ENCODE measurements at regions of chr11 and their contacts with region 1.

Region 1: DNA sequence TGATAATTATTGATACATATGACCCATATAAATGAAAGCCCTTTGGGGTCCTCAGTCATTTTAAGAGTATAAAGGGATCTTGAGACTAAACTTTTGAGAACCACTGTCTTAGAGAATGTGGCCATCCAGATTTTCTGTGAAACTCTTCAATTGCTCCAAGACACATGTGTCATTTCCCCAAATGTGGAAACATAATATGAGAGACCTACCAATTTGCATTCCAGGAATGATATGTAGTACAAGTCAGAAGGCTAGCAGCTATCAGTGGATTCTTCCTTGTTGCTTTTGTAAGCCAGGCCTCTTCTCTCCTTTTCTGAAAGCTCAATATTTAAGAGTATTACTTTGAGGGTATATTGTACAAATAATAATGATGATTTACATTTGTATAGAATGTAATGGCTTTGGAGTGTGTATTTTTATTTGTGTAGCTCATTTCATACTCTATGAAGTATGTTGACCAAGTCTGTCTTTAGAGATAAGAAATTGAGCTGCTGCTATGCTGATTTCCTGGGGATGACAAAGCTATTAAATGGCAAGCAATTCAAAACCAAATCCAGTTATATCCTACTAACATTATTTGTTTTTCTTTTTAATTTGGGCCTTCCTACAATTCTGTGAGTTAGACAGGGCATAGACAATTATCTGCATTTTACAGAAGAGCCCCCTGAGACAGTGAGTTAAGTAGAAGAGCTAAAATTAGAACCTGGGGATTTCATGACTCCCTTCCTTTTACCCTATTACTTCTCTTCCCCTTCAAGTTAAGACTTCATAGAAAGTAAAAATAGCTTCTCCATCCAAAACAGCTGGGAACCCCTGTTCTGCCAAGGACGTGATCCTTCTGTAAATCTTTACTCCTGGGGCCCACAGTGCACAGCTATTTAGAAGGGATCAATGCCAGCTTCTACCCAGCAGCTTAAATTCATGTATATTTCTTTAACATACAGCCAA is 131.9 kb downstream of the WNT11 start:
- DNase-seq: no peak
- H3K4me3 ChIP-seq: no peak overlapping the region
- H3K27ac ChIP-seq: peak overlapping the region in 3 of 5 donors; percentile 0 to 20 (median 15)
- H3K4me1 ChIP-seq: peaks cover 4 to 30% of the 10 kb centered on the region in 2 donors
- H3K27me3 ChIP-seq: no peaks in the 10 kb centered on the region
- CTCF ChIP-seq: no peak
- POLR2A ChIP-seq: no peak

Region 2: DNA sequence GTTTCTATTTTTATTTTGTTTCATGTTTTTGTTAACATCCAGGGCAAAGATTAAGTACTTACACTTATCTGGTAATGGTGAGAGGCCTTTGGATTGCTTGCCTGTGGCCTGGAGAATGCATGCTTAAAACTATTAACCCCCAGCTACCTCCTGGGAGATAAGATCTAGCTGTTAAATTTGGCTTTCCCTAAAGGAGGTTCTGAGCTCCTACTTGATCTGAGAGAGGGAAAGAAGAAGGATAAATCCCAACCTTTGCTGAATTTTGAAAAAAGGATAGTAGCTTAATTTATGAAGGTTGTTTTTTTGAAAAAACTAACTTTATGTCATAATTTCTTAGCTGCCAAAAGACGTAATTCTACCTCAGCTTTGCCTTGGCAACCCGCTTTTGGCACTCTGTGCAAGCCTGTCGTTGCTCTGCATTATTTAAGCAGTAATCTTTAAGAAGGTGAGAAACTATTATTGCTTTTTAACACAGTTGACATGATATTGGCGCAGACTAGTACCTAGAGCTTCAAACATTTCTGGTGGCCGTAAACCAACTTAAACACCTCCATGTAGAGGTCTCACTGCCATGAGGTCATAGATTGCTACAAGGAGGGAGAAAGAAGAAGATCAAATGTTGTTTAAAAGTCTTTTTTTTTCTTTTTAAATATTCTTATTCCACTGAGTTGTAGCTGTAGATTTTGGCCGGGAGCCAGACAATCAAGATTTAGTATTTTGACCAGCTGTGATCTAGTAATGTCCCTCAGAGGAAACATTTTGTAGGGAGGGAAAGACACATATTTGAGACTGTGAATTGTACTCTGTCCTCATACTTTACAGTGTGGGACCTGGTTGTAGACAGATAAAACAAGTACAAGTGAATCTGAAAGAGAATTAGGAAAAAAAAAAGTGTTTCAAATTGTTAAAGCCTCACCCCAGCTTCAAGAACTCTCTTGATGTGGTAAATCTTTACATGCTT is 57.5 kb after region 1 on chr11:
- intact Hi-C with region 1: loop called in 1 of 2 experiments (anchors 10 kb)
- DNase-seq: peak in 5 of 7 donors; percentile 29 to 68 (median 40)
- H3K4me3 ChIP-seq: no peak overlapping the region
- H3K27ac ChIP-seq: peak overlapping the region in 4 of 5 donors; percentile 3 to 30 (median 17)
- H3K4me1 ChIP-seq: peaks cover 15 to 20% of the 10 kb centered on the region in 2 donors
- H3K27me3 ChIP-seq: no peaks in the 10 kb centered on the region
- CTCF ChIP-seq: no peak
- POLR2A ChIP-seq: no peak